Activated CD4-positive, alpha-beta T cell treated with anti-CD3 and anti-CD28 coated beads, Interleukin-2, amount 10 ng/mL, durations not matched to agents 24 days and 14 days (primary cell): ENCODE measurements at regions of chr13 and their contacts with region 1.

Region 1: GRCh38 chr13:40777166-40777808 is 6.3 kb upstream of the MRPS31 start:
- DNase-seq: peak; percentile 84
- H3K4me3 Mint-ChIP-seq: peak overlapping the region; percentile 77
- H3K27ac Mint-ChIP-seq: peak overlapping the region; percentile 99
- H3K4me1 Mint-ChIP-seq: peaks cover 33% of the 10 kb centered on the region
- H3K27me3 Mint-ChIP-seq: no peaks in the 10 kb centered on the region

Region 2: DNA sequence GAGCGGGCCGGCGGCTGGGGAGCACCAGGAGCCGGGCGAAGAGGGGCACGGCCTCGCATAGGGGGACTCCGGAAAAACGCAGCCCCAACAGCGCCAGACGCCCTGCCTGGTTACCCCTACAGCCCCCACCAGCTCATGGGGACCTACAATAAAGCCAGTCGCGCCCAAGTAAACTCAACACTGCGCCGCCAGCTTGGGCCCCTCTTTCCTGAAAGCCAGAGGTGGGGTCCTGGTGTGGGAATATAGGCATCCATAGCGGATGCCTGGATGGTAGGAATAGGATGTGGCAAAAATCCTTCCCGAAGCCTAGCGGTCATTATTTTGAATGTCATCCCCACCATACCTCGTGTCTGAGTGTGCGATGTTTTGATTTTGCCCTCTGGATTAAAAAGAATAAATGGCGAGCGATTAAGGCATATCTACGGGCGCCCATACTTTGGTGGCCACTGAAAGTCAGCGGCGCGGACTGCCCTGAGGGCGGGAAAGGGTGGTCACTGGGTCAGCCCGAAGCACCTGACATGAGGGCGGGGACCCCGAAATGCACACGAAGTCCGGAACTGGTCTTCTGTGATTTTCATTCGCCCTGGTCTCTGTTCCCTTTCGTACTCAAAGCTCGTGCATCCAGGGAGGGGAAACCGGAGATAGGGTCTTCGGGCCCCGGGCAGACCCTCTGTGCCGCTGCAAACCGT is 1739.3 kb before region 1 on chr13 and contains the starts of genes NHLRC3 and PROSER1:
- intact Hi-C with region 1: loop called (anchors 2 kb)
- DNase-seq: peak; percentile 94
- H3K4me3 Mint-ChIP-seq: peak within 1 kb of the TSS; percentile 91
- H3K27ac Mint-ChIP-seq: peak within 1 kb of the TSS; percentile 95
- H3K4me1 Mint-ChIP-seq: peaks cover 48% of the 10 kb centered on the region
- H3K27me3 Mint-ChIP-seq: no peaks in the 10 kb centered on the region
- total RNA-seq, gene NHLRC3: 18.4 and 18.8 TPM in 2 replicates
- total RNA-seq, gene PROSER1: 86.6 and 89.8 TPM in 2 replicates

Region 3: DNA sequence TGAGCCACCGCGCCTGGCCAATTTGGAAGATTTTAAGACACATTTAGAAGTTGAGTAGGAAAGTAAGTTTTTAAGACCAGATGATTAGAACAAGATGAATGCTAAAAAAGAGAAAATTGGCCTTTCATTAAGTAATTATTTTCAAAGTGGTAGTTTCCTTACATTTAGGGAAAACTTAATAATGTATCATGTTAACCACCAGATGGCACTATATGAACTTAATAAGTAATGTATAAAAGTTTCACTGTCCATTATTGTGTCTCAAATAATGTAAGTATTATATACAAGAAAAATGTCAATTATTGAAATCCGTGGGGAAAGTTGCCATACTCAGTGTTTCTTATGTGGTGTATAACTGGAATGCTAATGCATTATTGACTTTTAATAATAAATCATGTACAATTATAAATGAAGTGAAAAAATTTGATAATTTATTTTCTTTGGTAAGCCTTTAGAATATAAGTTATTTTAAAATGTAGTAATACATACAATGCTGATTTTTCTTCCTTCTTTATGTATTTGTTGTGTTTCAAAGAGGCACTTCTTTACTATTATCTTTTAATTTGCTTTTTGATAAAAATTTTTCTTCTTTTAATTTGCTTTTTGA is 1092.7 kb before region 1 on chr13:
- intact Hi-C with region 1: loop called (anchors 1 kb)
- DNase-seq: no peak
- H3K4me3 Mint-ChIP-seq: no peak overlapping the region
- H3K27ac Mint-ChIP-seq: no peak overlapping the region
- H3K4me1 Mint-ChIP-seq: peaks cover 18% of the 10 kb centered on the region
- H3K27me3 Mint-ChIP-seq: no peaks in the 10 kb centered on the region

Region 4: DNA sequence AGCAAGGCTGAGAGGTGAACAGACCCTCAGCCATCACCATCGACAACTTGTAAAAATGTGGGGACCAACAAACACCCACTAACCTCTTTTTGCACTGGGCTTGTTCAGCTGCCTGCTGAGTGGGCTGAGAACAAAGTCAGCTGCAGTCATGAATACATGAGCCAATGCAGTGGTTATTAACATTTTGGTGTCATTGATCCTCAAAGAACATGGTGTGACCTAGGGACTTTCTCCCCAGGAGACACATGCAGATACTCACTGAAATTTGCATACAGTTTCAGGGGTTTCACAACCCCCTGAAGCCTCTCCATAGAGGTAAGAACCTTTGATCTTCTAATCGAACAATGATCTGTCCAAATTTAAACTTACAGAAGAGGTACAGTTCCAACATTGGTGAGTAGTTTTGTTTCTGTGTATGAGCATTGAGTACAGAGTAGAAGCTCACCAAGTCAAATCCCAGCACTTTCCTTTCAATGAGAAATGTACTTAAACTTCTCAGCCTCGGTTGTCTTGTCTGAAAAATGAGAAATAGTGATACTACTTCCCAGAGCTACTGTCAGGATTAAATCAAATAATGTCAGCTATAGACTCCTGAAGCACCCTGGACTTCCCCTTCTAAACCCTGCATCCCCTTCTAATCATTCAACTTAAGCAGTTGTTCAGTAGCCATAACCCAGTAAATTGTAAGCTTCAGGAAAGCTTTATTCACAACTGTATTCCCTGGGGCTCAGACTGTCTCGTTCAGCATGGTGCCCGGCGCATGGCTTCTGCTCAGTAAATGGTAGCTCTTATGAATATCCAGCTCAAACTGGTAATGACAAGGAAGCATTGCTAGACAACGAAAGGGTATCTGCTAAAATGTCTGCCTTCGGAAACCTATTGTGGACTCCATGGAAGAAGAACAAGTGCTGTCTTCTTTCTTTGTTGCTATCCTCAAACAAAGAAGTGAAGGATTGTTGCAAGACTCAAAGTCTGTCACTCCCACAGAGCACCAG is 259.5 kb before region 1 on chr13:
- intact Hi-C with region 1: loop called (anchors 5 kb)
- DNase-seq: no peak
- H3K4me3 Mint-ChIP-seq: peak overlapping the region; percentile 72
- H3K27ac Mint-ChIP-seq: peak overlapping the region; percentile 92
- H3K4me1 Mint-ChIP-seq: peaks cover 63% of the 10 kb centered on the region
- H3K27me3 Mint-ChIP-seq: no peaks in the 10 kb centered on the region

Region 5: DNA sequence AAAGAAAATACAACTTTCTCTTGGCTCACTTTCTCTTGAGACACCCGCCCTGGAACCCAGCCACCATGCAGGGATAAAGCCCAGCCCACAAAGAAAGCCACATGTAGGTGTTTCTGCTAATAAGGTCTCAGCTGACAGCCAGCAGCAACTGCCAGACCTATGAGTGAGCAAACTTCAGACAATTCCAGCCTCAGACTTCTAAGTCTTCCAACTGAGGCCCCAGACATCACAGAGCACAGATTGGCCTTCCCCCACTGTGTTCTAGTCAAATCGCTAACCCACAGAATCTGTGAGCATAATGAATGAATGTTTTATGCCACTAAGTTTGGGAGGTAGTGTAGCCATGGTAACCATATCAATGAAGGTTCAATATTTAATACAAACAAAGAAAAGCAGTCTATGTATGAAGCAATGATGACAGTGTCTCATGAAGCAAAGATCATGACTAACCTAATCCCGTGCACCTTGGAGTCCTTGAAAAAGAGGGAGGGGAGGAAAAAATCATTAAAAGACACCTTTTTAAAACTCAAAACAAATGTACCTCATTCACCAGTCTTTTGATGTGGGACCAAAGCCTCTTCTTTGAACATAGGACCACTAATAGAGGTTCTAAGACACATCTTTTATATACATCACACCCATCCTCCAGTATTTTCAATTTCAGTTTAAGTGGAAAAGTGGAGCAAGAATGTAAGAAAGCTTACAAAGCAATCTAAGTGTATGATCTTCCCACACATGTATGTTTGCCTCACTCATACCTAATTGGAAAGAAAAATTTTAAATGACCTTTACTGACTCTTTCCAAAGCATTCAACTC is 12.5 kb before region 1 on chr13:
- intact Hi-C with region 1: loop called (anchors 1 kb)
- DNase-seq: peak; percentile 69
- H3K4me3 Mint-ChIP-seq: peak overlapping the region; percentile 59
- H3K27ac Mint-ChIP-seq: peak overlapping the region; percentile 96
- H3K4me1 Mint-ChIP-seq: peaks cover 42% of the 10 kb centered on the region
- H3K27me3 Mint-ChIP-seq: no peaks in the 10 kb centered on the region

Region 6: GRCh38 chr13:40813661-40814454 is 36.6 kb after region 1 on chr13:
- intact Hi-C with region 1: loop called (anchors 2 kb)
- DNase-seq: peak; percentile 67
- H3K4me3 Mint-ChIP-seq: no peak overlapping the region
- H3K27ac Mint-ChIP-seq: no peak overlapping the region
- H3K4me1 Mint-ChIP-seq: peaks cover 5% of the 10 kb centered on the region
- H3K27me3 Mint-ChIP-seq: no peaks in the 10 kb centered on the region